Ovary (tissue), 10 donors: ENCODE measurements at regions of chr12 and their contacts with region 1.

Region 1: GRCh38 chr12:84785951-84786350 is 126.6 kb downstream of the SLC6A15 start:
- DNase-seq: no peak
- H3K4me3 ChIP-seq: no peak overlapping the region
- H3K27ac ChIP-seq: no peak overlapping the region
- H3K4me1 ChIP-seq: no peaks in the 10 kb centered on the region
- H3K27me3 ChIP-seq: no peaks in the 10 kb centered on the region
- CTCF ChIP-seq: no peak
- EP300 ChIP-seq: no peak
- POLR2A ChIP-seq: no peak

Region 2: DNA sequence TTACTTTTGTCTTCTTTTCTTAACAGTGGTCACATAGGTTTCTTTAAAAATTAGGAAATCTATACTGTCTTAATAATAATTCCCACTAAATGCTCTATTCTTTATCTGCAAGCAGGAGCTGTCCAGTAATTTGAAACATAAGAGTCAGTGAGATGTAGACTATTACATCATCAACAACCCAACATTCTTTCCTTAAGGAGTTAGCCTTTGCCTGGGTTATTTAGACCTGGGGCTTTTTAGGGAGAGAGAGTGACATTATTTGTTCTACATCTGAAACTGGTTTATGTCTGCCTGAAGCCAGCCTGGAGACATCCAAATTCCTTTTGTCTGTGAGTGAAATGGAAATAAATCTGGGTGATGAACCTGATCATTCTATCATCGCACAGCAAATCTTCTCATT is 1804.8 kb before region 1 on chr12:
- intact Hi-C with region 1: loop called in 1 of 4 experiments (anchors 5 kb)
- DNase-seq: no peak
- H3K4me3 ChIP-seq: no peak overlapping the region
- H3K27ac ChIP-seq: no peak overlapping the region
- H3K4me1 ChIP-seq: no peaks in the 10 kb centered on the region
- H3K27me3 ChIP-seq: no peaks in the 10 kb centered on the region
- CTCF ChIP-seq: no peak
- EP300 ChIP-seq: no peak
- POLR2A ChIP-seq: no peak

Region 3: DNA sequence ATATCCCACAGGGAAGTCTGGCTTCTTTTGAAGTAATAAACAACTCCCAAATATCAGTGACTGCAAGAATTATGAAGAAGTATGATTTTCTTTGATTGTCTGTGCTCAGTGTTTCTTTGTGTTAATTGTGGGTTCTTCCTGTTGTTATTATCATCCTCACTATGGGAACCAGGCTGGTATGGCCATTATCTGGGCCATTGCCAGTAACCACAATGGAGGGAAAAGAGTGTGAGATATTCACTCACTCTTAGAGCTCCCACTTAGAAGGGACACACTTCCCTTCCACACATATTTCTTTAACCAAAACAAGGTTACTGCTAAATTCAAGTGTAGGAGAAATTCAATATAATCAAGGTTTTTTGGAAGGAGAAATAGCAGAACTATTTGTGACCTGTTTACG is 377.0 kb before region 1 on chr12:
- intact Hi-C with region 1: no loop called
- DNase-seq: no peak
- H3K4me3 ChIP-seq: no peak overlapping the region
- H3K27ac ChIP-seq: no peak overlapping the region
- H3K4me1 ChIP-seq: no peaks in the 10 kb centered on the region
- H3K27me3 ChIP-seq: no peaks in the 10 kb centered on the region
- CTCF ChIP-seq: no peak
- EP300 ChIP-seq: no peak
- POLR2A ChIP-seq: no peak

Region 4: GRCh38 chr12:84632561-84632960 is 153.4 kb before region 1 on chr12:
- intact Hi-C with region 1: no loop called
- DNase-seq: no peak
- H3K4me3 ChIP-seq: no peak overlapping the region
- H3K27ac ChIP-seq: no peak overlapping the region
- H3K4me1 ChIP-seq: no peaks in the 10 kb centered on the region
- H3K27me3 ChIP-seq: no peaks in the 10 kb centered on the region
- CTCF ChIP-seq: no peak
- EP300 ChIP-seq: no peak
- POLR2A ChIP-seq: no peak